ENCODE measurements at regions of chr21 and their contacts with region 1.

Region 1: DNA sequence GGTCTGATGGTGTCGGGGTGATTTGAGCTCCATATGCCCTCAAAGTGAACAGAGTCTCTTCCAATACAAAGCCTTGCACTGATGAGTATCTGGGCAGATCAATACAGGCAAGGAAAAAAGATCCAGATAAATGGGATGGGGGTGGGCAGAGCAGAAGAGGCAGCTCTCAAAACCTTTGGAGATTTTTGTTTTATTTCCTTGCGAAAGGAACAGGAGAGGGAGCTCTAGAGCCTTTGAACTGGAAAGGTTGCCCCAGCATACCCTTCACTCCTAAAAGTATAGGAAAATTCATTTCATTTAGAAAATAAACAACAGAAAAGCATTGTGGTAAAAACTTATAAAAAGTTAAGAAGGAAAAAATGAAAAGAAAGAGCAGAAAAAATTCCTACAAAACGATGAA is 31.4 kb upstream of the OLIG2 start:
- DNase-seq: no peak
- ATAC-seq: no peak
- H3K4me3 ChIP-seq: no peak overlapping the region
- H3K27ac ChIP-seq: no peak overlapping the region
- H3K4me1 ChIP-seq: no peaks in the 10 kb centered on the region
- H3K27me3 ChIP-seq: peaks cover 0 to 33% (median 2%) of the 10 kb centered on the region in 9 donors
- CTCF ChIP-seq: peak in 9 of 12 donors; percentile 24 to 46 (median 38)
- POLR2A ChIP-seq: no peak

Region 2: GRCh38 chr21:33011462-33011861 is 17.2 kb after region 1 on chr21:
- intact Hi-C with region 1: no loop called
- DNase-seq: no peak
- ATAC-seq: peak in 1 of 4 donors; percentile 33
- H3K4me3 ChIP-seq: no peak overlapping the region
- H3K27ac ChIP-seq: no peak overlapping the region
- H3K4me1 ChIP-seq: peaks cover 0 to 25% (median 0%) of the 10 kb centered on the region in 12 donors
- H3K27me3 ChIP-seq: peaks cover 0 to 55% (median 13%) of the 10 kb centered on the region in 9 donors
- CTCF ChIP-seq: no peak
- POLR2A ChIP-seq: no peak

Region 3: DNA sequence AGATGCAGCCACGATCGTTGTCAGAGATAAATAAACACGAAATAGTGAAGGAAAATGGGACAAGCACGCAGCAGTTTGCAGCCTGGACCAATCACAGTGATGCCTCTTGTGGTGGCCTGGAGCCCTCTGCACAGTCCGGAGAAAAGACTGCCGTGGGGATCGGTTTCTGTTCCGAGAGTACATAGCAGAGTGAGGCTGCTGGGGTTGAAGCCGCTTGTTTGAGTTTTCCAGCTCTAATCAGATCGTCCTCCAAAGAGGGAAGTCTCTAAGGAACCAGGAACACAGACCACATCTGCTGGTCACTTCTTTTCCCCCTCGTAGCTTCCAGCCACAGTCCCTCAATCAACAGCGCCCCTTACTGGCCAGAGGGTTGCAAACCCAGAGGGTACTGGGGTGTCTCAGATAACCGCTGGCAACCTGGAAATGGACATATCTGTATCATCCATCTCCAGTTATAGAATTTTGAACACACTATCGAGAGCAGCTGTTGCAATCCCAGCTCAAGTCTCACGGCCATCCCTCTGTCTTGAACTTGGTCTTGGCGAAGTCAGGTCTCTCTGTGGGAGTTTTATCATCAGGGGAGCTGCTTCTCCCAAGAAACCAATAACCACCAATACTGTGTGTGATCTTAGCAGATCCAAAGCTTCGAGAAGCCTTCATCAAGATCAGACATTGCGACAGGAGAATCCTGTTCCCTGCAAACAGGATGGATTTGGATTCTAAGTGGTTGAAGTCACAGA is 133.0 kb after region 1 on chr21:
- intact Hi-C with region 1: loop called in 7 of 10 experiments (anchors 2 to 10 kb)
- DNase-seq: peak; percentile 53 to 77 (median 67)
- ATAC-seq: peak; percentile 64 to 91 (median 90)
- H3K4me3 ChIP-seq: peak overlapping the region in 10 of 12 donors; percentile 12 to 52 (median 40)
- H3K27ac ChIP-seq: no peak overlapping the region
- H3K4me1 ChIP-seq: peaks cover 0 to 9% (median 2%) of the 10 kb centered on the region in 12 donors
- H3K27me3 ChIP-seq: peaks cover 0 to 39% (median 9%) of the 10 kb centered on the region in 9 donors
- CTCF ChIP-seq: peak; percentile 46 to 81 (median 70)
- POLR2A ChIP-seq: no peak

Region 4: DNA sequence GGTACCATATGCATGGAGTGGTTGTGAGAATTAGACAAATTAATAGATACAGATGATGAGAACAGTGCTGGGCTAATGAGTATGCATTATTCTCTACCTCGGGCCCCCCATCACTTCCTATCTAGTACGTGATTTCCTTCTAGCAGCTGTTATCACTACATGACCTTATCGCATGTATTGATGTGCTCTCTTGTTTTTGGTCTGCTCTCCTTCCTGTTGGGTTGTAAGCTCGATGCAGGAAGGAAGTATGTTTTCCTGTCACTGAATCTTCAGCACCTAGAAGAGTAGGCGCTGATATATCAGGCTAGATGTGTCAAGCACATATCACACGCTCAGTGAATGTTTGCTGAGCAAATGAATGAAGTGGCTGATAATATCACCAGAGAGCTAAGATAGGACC is 191.5 kb after region 1 on chr21:
- intact Hi-C with region 1: loop called in 4 of 10 experiments (anchors 10 kb)
- DNase-seq: no peak
- ATAC-seq: peak in 1 of 4 donors; percentile 28
- H3K4me3 ChIP-seq: no peak overlapping the region
- H3K27ac ChIP-seq: peak overlapping the region in 1 of 12 donors; percentile 35
- H3K4me1 ChIP-seq: peaks cover 0 to 21% (median 2%) of the 10 kb centered on the region in 12 donors
- H3K27me3 ChIP-seq: peaks cover 0 to 3% (median 0%) of the 10 kb centered on the region in 9 donors
- CTCF ChIP-seq: no peak
- POLR2A ChIP-seq: no peak

Region 5: DNA sequence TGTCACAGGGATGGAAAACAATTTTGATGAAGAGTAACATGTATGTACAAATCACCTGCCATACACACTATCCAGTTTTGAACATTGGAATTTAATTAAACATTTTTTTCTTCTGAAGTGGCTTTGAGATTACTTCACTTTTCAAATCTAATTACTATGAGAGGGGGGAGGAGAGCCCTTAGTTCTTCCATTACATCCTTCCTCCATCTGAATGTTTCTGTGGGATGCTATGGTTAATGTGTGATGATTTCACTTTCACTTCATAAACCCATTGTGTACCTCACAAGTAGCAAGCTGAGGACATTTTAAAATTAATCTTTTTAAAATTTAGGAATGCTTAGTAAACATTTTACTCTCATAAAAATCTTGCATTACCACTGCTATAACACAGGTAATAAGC is 1897.9 kb after region 1 on chr21:
- intact Hi-C with region 1: no loop called
- DNase-seq: no peak
- ATAC-seq: no peak
- H3K4me3 ChIP-seq: no peak overlapping the region
- H3K27ac ChIP-seq: no peak overlapping the region
- H3K4me1 ChIP-seq: peaks cover 0 to 40% (median 15%) of the 10 kb centered on the region in 12 donors
- H3K27me3 ChIP-seq: peaks cover 10 to 72% (median 38%) of the 10 kb centered on the region in 9 donors
- CTCF ChIP-seq: no peak
- POLR2A ChIP-seq: no peak